Heart left ventricle (tissue), 16 donors: ENCODE measurements at regions of chr1 and their contacts with region 1.

Region 1: DNA sequence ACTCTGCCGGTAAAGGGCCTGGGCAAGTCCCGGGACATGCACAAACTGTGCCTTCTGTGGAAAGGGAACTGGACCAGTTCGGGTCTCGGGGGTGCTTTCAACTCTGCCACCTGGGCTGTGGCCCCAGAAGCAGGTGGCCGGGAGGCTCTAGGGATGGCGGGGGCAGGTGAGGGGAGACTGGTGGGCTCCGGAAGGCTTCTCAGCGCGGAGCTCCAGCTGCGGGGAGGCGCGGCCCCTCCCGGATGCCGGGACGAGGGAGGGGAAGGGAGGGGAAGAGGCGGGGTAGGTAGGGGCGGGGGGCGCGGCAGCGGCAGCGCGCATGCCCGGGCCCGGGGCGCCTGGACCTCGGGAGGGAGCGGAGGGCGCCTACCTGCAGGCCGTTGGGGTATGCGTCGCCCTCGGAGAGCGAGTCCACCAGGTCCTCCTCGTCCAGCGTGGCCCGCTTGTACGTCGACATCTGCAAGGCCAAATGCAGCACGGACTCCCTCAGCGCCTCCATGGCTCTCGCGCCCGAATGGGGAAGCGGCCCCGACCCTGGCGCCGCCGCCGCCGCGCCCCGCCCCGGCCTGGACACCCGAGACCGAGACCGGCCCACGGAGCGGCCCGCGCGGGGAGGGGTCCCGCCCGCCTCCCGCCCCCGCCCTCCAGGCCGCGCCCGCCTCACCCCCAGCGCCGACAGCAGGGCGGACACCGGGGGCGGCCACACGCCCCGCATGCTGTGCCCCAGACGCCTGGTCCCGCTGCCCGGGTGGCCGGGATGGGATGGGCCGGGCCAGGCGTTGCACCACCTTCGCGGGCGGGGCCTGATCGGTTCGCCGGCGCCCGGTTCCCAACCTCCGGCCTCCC is at the start of gene ECE1:
- DNase-seq: peak; percentile 57 to 81 (median 66)
- ATAC-seq: peak in 3 of 4 donors; percentile 52 to 69 (median 61)
- H3K4me3 ChIP-seq: peak within 1 kb of the TSS; percentile 58 to 92 (median 72)
- H3K27ac ChIP-seq: peak within 1 kb of the TSS; percentile 42 to 92 (median 80)
- H3K4me1 ChIP-seq: peaks cover 0 to 74% (median 40%) of the 10 kb centered on the region in 12 donors
- H3K27me3 ChIP-seq: no peaks in the 10 kb centered on the region
- CTCF ChIP-seq: no peak
- POLR2A ChIP-seq: peak in 1 of 2 donors; percentile 27
- total RNA-seq, gene ECE1: 37.3 to 140 (median 59.4) TPM

Region 2: GRCh38 chr1:20932437-20932977 is 357.4 kb before region 1 on chr1:
- intact Hi-C with region 1: no loop called
- DNase-seq: no peak
- ATAC-seq: no peak
- H3K4me3 ChIP-seq: no peak overlapping the region
- H3K27ac ChIP-seq: no peak overlapping the region
- H3K4me1 ChIP-seq: no peaks in the 10 kb centered on the region
- H3K27me3 ChIP-seq: no peaks in the 10 kb centered on the region
- CTCF ChIP-seq: no peak
- POLR2A ChIP-seq: no peak

Region 3: GRCh38 chr1:21334214-21335087 is 44.5 kb after region 1 on chr1:
- intact Hi-C with region 1: loop called in 4 of 10 experiments (anchors 5 kb)
- DNase-seq: peak; percentile 76 to 88 (median 77)
- ATAC-seq: peak; percentile 23 to 59 (median 53)
- H3K4me3 ChIP-seq: peak overlapping the region in 10 of 12 donors; percentile 18 to 50 (median 34)
- H3K27ac ChIP-seq: peak overlapping the region; percentile 15 to 94 (median 82)
- H3K4me1 ChIP-seq: peaks cover 18 to 93% (median 74%) of the 10 kb centered on the region in 12 donors
- H3K27me3 ChIP-seq: no peaks in the 10 kb centered on the region
- CTCF ChIP-seq: peak; percentile 67 to 91 (median 84)
- POLR2A ChIP-seq: peak in 1 of 2 donors; percentile 8